WTC11 (cell line): ENCODE measurements at regions of chr22 and their contacts with region 1.

Region 1: DNA sequence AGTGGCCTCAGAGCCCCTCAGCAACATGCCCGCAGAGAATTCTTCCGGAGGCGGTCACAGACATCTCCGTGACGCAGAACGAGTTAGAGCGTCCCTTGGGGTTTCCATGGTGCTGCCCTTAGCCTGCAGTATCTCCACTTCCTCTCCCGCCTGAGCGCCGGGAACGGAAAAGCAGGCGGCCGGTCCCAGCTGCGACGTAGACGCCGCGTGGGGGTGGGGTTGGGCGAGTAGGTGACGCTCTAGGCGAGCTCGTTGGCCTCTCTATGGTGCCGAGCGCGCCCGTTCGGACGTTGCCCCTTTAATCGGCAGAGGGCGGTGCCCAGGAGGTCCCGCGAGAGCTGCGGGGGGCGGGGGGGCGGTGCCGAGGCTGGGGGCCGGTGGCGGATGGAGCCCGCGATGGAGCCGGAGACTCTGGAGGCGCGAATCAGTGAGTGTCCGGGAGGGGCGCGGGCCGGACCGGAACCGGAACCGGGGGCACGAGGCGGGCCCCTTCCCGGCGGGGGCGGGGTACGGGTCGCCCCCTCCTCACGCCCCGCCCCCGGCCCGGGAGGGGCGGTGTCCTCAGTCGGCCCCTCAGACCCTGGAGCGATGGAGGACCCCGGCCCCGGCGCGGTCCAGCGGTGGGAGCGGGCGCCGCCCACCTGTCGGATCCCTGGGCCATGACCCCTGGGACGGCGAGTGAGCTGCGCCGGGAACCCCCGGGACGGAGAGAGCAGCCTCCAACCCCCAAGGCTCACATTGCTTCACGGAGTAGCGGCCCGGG is at the start of gene GGA1:
- DNase-seq: peak; percentile 90
- ATAC-seq: peak; percentile 70
- H3K4me3 Mint-ChIP-seq: peak within 1 kb of the TSS; percentile 90
- H3K27ac Mint-ChIP-seq: peak within 1 kb of the TSS; percentile 98
- H3K4me1 Mint-ChIP-seq: peaks cover 18% of the 10 kb centered on the region
- H3K27me3 Mint-ChIP-seq: no peaks in the 10 kb centered on the region
- CTCF ChIP-seq: no peak
- total RNA-seq, gene GGA1: 59.5 to 66.3 TPM (median 61.6 TPM) in 3 replicates

Region 2: DNA sequence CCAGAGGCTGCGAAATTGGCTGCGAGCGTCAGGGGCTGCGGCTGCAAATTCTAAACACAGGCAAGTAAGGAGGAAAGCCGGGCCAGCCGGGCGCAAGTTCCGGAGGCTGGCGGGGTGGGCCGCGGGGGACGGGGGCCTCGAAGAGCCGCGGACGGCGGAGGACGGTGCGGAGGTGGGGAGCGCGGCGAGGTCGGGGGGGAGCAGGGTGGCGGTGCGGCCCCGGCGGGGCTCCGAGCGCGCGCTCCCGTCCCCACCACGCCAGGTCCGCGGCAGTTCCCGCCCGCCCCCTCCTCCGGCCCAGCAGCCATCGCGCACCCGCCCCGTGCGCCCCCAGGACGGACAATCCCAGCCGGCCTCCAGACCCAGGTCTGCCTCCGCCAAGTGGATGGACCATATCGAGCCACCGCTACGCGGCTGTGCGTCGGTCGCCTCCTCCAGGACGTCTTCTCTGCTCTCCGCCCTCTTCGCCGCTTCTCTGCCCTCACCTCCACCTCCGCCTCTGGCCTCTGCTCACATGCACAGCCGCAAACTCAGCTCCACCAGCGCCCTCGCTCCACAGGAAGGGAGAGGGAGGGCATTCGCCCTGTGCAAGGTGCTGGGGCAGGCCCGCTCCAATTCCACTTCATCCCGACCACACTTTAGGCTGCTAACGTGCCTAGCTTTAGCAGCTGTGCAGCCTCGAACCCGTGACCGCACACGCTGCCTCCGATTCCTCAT is 188.5 kb before region 1 on chr22:
- CTCF ChIA-PET with region 1: no interaction called
- POLR2A ChIA-PET with region 1: no interaction called
- DNase-seq: peak; percentile 64
- ATAC-seq: peak; percentile 79
- H3K4me3 Mint-ChIP-seq: peak overlapping the region; percentile 87
- H3K27ac Mint-ChIP-seq: no peak overlapping the region; the same call in 1 of the 2 replicates
- H3K4me1 Mint-ChIP-seq: peaks cover 32% of the 10 kb centered on the region
- H3K27me3 Mint-ChIP-seq: peaks cover 48% of the 10 kb centered on the region
- CTCF ChIP-seq: no peak

Region 3: DNA sequence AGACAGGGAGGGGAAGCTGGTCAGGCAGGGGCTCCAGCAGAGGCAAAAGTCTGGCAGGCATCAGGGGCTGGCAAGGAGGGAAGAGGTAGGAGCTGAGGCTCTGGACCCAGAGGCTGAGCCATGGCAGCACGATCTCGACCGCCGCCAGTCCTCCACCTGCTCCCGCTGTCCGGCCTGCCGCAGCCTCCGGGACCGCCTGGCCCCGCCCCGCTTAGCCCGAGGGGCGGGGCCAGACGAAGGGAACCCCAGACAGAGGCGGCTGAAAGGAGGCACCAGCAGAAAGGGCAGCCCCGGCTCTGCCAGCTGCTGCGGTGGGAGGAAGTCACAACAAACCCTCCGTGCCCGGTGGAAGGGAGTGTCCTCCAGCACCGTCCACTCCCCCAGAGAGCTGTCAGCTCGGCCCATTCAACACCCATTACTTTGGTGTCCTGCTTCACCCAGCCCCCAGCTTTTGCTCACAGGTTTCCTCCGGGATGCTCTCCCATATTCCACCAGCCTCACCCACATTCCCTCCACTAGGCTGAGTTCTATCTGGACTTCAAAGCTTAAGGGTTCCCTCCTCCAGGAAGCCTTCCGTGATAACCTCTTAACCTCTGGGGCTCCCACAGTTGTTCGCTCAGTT is 122.3 kb before region 1 on chr22 and contains the start of gene MFNG:
- CTCF ChIA-PET with region 1: interaction called, 11 read pairs
- POLR2A ChIA-PET with region 1: no interaction called
- DNase-seq: peak; percentile 75
- ATAC-seq: peak; percentile 92
- H3K4me3 Mint-ChIP-seq: peak within 1 kb of the TSS; percentile 56
- H3K27ac Mint-ChIP-seq: peak within 1 kb of the TSS; percentile 47
- H3K4me1 Mint-ChIP-seq: peaks cover 54% of the 10 kb centered on the region
- H3K27me3 Mint-ChIP-seq: no peaks in the 10 kb centered on the region
- CTCF ChIP-seq: no peak
- total RNA-seq, gene MFNG: 3.2 to 4.8 TPM (median 3.7 TPM) in 3 replicates

Region 4: GRCh38 chr22:37544955-37545699 is 63.5 kb before region 1 on chr22:
- CTCF ChIA-PET with region 1: interaction called, 41 read pairs
- POLR2A ChIA-PET with region 1: interaction called, 19 read pairs
- DNase-seq: peak; percentile 92
- ATAC-seq: peak; percentile 74
- H3K4me3 Mint-ChIP-seq: peak overlapping the region; percentile 53
- H3K27ac Mint-ChIP-seq: peak overlapping the region; percentile 74; the same call in 1 of the 2 replicates
- H3K4me1 Mint-ChIP-seq: peaks cover 29% of the 10 kb centered on the region
- H3K27me3 Mint-ChIP-seq: no peaks in the 10 kb centered on the region; the same call in 1 of the 2 replicates
- CTCF ChIP-seq: peak; percentile 53; the same call in 1 of the 2 replicates

Region 5: DNA sequence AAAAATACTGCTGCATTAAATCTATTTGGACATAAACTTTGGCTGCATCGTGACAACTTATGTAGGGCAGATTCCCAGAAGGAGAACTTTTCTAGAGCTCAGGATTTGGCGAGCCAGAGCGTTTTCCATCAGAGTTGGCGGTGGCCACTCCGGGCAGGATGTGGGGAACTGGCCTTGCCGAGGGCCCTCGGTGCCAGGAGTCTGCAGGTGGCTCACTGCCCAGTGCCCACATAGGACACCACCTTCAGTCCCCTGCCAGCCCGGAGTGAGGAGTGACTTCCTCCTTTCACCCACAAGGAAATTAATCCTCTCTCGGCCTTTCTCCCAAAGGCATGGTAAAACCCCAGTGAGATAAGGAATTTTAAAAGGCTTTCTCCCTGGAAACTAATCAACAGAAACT is 27.2 kb before region 1 on chr22:
- CTCF ChIA-PET with region 1: interaction called, 11 read pairs
- POLR2A ChIA-PET with region 1: no interaction called
- DNase-seq: no peak
- ATAC-seq: no peak
- H3K4me3 Mint-ChIP-seq: no peak overlapping the region
- H3K27ac Mint-ChIP-seq: no peak overlapping the region
- H3K4me1 Mint-ChIP-seq: peaks cover 4% of the 10 kb centered on the region
- H3K27me3 Mint-ChIP-seq: no peaks in the 10 kb centered on the region; the same call in 1 of the 2 replicates
- CTCF ChIP-seq: no peak

Region 6: DNA sequence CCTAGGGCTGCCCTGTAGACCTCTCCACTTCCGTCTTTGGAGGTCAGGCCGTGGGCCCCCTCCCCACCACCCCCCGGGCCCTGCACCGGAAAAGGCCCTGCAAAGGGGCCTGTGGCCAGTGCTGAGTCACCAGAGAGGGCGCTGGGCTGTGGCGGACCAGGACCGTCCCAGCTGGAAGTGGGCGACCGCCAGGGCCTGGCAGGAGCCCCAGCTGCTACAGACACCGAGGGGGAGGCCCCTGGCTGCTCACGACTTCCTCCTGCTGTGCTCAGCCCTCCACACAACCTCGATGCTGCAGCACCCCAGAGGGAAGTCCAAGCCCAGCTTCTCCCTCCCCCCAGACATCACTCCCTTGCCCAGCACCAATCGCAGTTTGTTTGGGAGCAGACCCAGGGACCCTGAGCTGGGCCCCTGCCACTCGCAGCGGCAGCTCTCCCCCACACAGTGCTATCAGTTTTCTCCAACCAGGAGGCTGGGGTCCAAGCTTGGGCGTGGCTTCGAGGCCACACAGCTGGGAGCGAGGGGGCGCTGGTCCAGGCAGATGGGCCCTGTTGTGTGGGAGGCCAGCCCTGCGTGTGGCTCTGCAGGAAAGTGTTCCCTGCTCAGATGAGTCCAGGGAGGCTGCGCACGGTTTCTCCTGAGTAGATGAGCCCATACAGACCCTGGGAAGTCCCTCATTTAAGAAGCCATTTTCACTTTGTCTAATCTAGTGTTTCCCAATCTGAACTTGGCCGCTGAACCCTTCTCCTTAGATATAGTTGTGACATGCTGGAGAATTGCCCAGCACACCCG is 25.2 kb after region 1 on chr22:
- CTCF ChIA-PET with region 1: interaction called, 39 read pairs
- POLR2A ChIA-PET with region 1: interaction called, 6 read pairs
- DNase-seq: peak; percentile 68
- ATAC-seq: peak; percentile 72
- H3K4me3 Mint-ChIP-seq: peak overlapping the region; percentile 33
- H3K27ac Mint-ChIP-seq: peak overlapping the region; percentile 53; the same call in 1 of the 2 replicates
- H3K4me1 Mint-ChIP-seq: peaks cover 21% of the 10 kb centered on the region
- H3K27me3 Mint-ChIP-seq: no peaks in the 10 kb centered on the region
- CTCF ChIP-seq: no peak

Region 7: DNA sequence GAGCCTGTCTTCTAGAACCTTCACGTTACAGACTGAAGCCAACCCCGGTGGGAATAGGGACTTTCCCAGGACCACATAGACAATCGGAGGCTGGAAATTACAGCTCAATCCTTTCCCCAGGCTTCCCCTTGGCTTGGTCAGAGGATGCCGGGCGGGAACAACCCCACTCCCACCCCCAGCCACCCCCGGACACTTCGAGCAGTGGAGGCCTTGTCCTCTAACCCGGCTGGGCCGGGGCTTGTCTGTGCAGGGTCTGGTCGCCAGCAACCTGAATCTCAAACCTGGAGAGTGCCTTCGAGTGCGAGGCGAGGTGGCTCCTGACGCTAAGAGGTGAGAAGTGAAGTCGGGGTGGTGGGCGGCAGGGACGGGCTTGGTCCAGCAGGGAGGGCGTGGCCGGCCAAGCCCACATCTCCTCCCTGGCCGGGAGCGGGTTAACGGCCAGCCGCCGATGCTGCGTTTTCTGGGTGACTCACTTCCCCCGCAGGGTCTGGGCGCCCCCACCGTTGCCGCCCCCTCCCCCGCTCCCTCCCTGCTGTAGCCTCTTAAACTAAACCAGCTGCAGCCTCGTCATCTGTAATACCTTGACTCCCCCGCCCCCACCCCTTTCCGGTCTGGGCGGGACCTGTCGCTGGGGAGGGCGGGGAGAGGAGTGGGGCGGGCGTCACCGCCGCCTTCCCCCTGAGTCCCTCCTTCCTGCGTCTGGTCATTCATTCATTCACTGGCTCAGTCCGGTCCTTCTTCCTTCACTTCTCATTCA is 68.3 kb after region 1 on chr22:
- CTCF ChIA-PET with region 1: interaction called, 30 read pairs
- POLR2A ChIA-PET with region 1: interaction called, 5 read pairs
- DNase-seq: peak; percentile 86
- ATAC-seq: peak; percentile 74
- H3K4me3 Mint-ChIP-seq: peak overlapping the region; percentile 72
- H3K27ac Mint-ChIP-seq: peak overlapping the region; percentile 84
- H3K4me1 Mint-ChIP-seq: peaks cover 13% of the 10 kb centered on the region
- H3K27me3 Mint-ChIP-seq: peaks cover 18% of the 10 kb centered on the region
- CTCF ChIP-seq: no peak

Region 8: DNA sequence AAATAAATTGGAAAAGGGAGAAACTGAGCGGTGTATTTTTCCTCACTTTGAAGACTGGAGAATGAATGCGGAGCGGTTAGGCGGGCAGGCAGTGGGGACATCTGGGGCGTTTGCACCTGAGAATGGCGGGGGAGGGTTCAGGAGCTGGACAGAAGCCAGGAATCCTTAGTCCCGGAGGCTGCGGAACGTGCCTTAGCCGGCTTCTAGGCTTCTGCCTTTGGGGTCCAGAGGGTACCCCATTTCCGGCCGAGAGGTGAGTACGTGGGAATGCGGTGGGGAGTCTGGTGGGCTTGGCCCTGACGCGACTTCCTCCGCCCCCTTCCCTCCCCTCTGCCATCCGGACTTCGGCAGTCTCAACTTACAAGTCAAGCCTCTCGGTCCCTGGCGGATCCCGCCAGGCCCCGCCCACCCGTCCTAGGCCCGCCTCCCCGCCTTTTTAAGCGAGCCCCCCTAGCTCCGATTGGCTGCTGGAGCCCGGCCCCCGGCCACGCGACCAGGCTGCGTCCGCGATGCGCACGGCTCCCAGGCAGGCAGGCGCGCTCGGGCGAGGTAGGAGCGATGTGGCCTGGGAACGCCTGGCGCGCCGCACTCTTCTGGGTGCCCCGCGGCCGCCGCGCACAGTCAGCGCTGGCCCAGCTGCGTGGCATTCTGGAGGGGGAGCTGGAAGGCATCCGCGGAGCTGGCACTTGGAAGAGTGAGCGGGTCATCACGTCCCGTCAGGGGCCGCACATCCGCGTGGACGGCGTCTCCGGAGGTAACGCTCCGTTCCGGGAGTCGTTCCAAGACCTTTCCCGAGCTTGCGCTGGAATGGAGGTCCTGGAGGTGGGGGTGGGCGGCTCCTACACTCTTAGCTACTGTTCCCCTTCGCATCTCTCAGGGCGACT is 199.0 kb after region 1 on chr22 and contains the start of gene GCAT:
- CTCF ChIA-PET with region 1: interaction called, 10 read pairs
- POLR2A ChIA-PET with region 1: no interaction called
- DNase-seq: peak; percentile 98
- ATAC-seq: peak; percentile 87
- H3K4me3 Mint-ChIP-seq: peak within 1 kb of the TSS; percentile 84
- H3K27ac Mint-ChIP-seq: no peak within 1 kb of the TSS
- H3K4me1 Mint-ChIP-seq: peaks cover 41% of the 10 kb centered on the region
- H3K27me3 Mint-ChIP-seq: peaks cover 59% of the 10 kb centered on the region
- CTCF ChIP-seq: no peak
- total RNA-seq, gene GCAT: 33.0 to 36.4 TPM (median 36.3 TPM) in 3 replicates

Region 9: DNA sequence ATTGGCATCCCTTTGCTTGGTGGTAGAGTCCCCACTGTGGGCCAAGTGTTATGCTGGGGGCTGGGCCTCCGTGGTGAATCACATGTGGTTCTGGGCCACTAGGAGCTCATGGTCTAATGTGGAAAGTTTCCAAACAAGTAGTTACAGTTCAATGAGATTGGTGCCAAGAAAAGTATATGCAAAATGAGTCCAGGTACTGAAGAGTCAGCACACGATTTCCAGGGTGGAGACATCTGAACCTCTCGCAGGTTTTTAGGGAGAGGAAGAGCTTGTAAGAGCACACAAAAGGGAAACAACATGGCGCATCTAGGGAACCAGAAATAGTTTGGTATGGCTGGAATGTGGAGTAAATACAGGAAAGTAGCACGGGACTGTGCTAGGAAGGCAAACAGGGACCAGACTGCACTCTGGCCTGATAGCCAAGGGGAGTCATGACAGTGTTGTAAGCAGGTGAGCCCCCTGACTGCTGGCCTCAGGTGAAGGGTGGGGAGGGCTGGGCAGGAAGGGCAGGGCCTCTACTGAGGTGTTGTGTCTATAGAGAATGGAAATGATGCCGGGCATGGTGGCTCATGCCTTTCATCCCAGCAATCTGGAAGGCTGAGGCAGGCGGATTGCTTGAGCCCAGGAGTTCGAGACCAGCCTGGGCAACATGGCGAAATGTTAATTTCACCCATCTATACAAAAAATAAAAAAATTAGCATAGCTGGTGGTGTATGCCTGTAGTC is 357.4 kb after region 1 on chr22:
- CTCF ChIA-PET with region 1: no interaction called
- POLR2A ChIA-PET with region 1: no interaction called
- DNase-seq: no peak
- ATAC-seq: no peak
- H3K4me3 Mint-ChIP-seq: no peak overlapping the region
- H3K27ac Mint-ChIP-seq: no peak overlapping the region; the same call in 1 of the 2 replicates
- H3K4me1 Mint-ChIP-seq: peaks cover 10% of the 10 kb centered on the region
- H3K27me3 Mint-ChIP-seq: no peaks in the 10 kb centered on the region
- CTCF ChIP-seq: no peak